PC-9 (cell line): ENCODE measurements at regions of chr1 and their contacts with region 1.

Region 1: GRCh38 chr1:234610348-234611152 is 572 bp upstream of the IRF2BP2 start:
- DNase-seq: peak; percentile 72 to 93
- H3K4me3 ChIP-seq: peak overlapping the region; percentile 91
- H3K27ac ChIP-seq: peak overlapping the region; percentile 100
- H3K4me1 ChIP-seq: peaks cover 38% of the 10 kb centered on the region
- H3K27me3 ChIP-seq: no peaks in the 10 kb centered on the region
- CTCF ChIP-seq: no peak

Region 2: GRCh38 chr1:234599617-234600417 is 10.7 kb before region 1 on chr1:
- CTCF ChIA-PET with region 1: no interaction called
- POLR2A ChIA-PET with region 1: interaction called, 12 read pairs
- intact Hi-C with region 1: no loop called
- DNase-seq: peak; percentile 69 to 89
- H3K4me3 ChIP-seq: peak overlapping the region; percentile 62
- H3K27ac ChIP-seq: peak overlapping the region; percentile 99
- H3K4me1 ChIP-seq: peaks cover 61% of the 10 kb centered on the region
- H3K27me3 ChIP-seq: no peaks in the 10 kb centered on the region
- CTCF ChIP-seq: no peak; the same call in 1 of the 2 replicates

Region 3: DNA sequence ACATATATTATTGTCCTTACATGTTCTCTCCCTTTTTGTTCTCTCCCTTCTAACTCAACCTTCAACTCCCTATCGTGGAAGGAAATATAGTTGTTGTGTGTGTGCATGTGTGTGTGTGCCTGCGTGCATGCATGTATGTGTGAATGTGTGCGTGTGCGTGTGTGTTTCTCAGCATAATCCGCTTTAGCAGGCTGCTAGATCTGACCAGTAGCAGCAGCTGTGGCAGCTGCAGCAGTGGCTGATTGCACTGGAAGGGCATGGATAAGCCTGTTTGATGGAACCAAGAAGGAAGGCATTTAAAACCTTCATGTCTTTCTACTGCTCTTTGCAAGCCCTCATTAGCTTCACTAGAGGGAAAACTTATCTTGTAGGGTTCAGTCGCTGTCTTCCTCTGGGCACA is 65.0 kb after region 1 on chr1:
- CTCF ChIA-PET with region 1: no interaction called
- POLR2A ChIA-PET with region 1: no interaction called
- intact Hi-C with region 1: no loop called
- DNase-seq: no peak
- H3K4me3 ChIP-seq: no peak overlapping the region
- H3K27ac ChIP-seq: no peak overlapping the region
- H3K4me1 ChIP-seq: peaks cover 11% of the 10 kb centered on the region; the same call in 1 of the 2 replicates
- H3K27me3 ChIP-seq: no peaks in the 10 kb centered on the region
- CTCF ChIP-seq: no peak

Region 4: DNA sequence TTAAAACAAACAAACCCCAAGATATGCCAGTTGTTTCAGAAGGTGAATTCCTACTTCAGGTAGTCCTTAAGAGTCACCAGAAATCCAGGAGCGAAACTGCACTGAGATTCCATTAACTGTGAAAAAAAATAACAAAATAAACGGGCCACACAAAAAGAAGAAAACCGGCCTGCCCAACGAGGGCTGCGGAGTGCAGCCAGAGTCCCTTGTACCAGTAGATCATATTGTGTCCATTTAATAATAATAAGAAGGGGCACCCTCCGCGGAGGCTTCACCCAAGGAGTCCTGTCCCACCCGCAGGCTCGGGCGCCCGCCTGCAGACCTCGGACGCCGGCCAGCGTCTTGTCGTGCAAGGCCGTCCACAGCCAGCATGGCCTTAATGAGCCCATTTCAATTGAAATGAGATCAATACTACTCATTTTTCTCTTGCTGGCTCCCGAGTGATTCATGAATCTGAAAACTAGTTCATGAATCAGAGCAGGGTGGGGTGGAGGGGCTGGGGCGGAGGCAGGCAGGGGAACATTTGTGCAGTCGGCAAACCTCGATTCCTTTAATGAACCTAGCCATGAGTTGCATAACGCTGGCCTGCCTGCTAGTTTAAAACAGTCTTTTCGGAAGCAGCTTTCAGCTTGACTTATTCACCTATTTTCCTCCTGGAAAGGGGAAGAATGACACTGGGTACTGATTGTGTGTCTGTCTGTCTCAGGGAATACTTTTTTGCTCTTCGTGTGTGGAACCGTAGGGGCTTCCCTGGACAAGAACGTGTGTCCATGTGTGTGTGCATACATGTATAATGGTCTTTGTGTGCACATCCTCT is 112.6 kb after region 1 on chr1:
- CTCF ChIA-PET with region 1: interaction called, 5 read pairs
- POLR2A ChIA-PET with region 1: interaction called, 65 read pairs
- intact Hi-C with region 1: loop called (anchors 1 kb)
- DNase-seq: peak in 1 of 2 experiments; percentile 90
- H3K4me3 ChIP-seq: peak overlapping the region; percentile 53
- H3K27ac ChIP-seq: peak overlapping the region; percentile 97
- H3K4me1 ChIP-seq: peaks cover 71% of the 10 kb centered on the region
- H3K27me3 ChIP-seq: no peaks in the 10 kb centered on the region
- CTCF ChIP-seq: no peak

Region 5: GRCh38 chr1:234875953-234876855 is 265.7 kb after region 1 on chr1:
- CTCF ChIA-PET with region 1: no interaction called
- POLR2A ChIA-PET with region 1: interaction called, 4 read pairs
- intact Hi-C with region 1: loop called (anchors 1 kb)
- DNase-seq: peak; percentile 70 to 98
- H3K4me3 ChIP-seq: peak overlapping the region; percentile 45; the same call in 1 of the 2 replicates
- H3K27ac ChIP-seq: peak overlapping the region; percentile 99
- H3K4me1 ChIP-seq: peaks cover 70% of the 10 kb centered on the region
- H3K27me3 ChIP-seq: no peaks in the 10 kb centered on the region
- CTCF ChIP-seq: no peak

Region 6: DNA sequence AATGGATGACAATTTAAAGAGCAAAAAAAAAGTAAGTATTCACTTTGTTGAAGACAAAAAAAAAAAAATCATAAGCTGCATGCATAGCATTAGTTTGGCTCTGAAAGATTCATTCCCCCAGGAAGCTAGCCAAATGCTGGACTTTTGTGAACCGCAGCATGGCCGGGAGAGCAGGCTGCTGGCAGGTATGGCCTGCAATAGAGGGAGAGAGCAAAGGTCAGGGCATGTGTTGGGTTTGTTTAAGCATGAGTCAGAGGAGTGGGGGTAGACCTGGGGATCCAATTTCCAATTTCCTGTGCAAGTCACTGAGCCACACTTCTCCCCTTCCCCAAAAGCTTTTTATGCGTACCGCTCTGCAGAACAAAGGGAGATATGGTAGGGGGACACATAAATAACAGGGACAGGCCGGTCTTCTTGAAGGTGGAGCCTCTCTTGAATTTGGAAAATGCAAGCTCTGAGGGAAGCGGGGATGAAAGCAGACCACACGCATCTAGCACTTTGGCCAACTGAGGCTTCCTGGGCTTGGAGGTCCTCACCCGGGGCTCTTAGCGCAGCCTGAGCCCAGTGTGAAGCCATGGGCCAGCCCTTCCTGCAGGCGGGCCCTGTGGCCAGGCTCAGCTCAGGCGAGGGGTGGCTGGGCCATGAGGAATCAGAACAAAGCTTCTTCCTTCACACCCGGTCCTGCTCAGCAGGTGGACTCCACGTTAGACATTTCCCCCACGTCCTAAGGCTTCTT is 346.9 kb after region 1 on chr1:
- CTCF ChIA-PET with region 1: interaction called, 3 read pairs
- POLR2A ChIA-PET with region 1: interaction called, 24 read pairs
- intact Hi-C with region 1: loop called (anchors 1 kb)
- DNase-seq: peak; percentile 91 to 96
- H3K4me3 ChIP-seq: peak overlapping the region; percentile 37; the same call in 1 of the 2 replicates
- H3K27ac ChIP-seq: peak overlapping the region; percentile 99
- H3K4me1 ChIP-seq: peaks cover 82% of the 10 kb centered on the region
- H3K27me3 ChIP-seq: no peaks in the 10 kb centered on the region
- CTCF ChIP-seq: no peak

Region 7: GRCh38 chr1:235011599-235012435 is 401.3 kb after region 1 on chr1:
- CTCF ChIA-PET with region 1: no interaction called
- POLR2A ChIA-PET with region 1: interaction called, 16 read pairs
- intact Hi-C with region 1: loop called (anchors 1 kb)
- DNase-seq: peak; percentile 89 to 98
- H3K4me3 ChIP-seq: peak overlapping the region; percentile 28; the same call in 1 of the 2 replicates
- H3K27ac ChIP-seq: peak overlapping the region; percentile 98
- H3K4me1 ChIP-seq: peaks cover 35% of the 10 kb centered on the region
- H3K27me3 ChIP-seq: no peaks in the 10 kb centered on the region
- CTCF ChIP-seq: no peak